K562 (cell line): ENCODE measurements at regions of chr2 and their contacts with region 1.

Region 1: DNA sequence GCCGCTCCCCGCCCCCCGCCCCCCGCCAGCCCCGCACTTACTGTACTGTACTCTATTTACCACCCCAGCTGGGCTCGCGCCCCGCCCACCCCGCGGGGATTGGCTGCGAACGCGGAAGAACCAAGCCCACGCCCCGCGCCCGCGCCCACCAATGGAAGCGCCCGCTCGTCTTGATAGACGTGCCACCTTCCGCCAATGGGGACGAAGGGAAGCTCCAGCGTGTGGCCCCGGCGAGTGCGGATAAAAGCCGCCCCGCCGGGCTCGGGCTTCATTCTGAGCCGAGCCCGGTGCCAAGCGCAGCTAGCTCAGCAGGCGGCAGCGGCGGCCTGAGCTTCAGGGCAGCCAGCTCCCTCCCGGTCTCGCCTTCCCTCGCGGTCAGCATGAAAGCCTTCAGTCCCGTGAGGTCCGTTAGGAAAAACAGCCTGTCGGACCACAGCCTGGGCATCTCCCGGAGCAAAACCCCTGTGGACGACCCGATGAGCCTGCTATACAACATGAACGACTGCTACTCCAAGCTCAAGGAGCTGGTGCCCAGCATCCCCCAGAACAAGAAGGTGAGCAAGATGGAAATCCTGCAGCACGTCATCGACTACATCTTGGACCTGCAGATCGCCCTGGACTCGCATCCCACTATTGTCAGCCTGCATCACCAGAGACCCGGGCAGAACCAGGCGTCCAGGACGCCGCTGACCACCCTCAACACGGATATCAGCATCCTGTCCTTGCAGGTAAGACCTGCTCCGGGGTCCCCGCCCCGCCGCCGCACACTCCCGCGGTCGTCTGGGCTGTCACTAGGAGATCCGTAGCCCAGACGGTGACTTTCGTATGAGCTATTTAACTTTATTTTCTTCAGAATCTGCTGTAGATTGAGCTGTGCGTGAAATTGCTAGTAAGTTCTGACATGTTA is at the start of gene ID2:
- DNase-seq: peak; percentile 97 to 99 (median 98)
- ATAC-seq: peak; percentile 75
- H3K4me3 ChIP-seq: peak within 1 kb of the TSS; percentile 68
- H3K27ac ChIP-seq: peak within 1 kb of the TSS; percentile 56; the same call in 2 of the 3 replicates
- H3K4me1 ChIP-seq: peaks cover 34 to 47% of the 10 kb centered on the region in 2 experiments
- H3K27me3 ChIP-seq: no peaks in the 10 kb centered on the region
- CTCF ChIP-seq: 0 out of 6 replicates have a peak, but pooled peaks of 1 of the 3 experiments have one; percentile 3
- EP300 ChIP-seq: 0 out of 2 replicates have a peak, but pooled peaks have one; percentile 5
- POLR2A ChIP-seq: peak; percentile 99
- RAD21 ChIP-seq: peak in 1 of 2 experiments; percentile 32; a peak in 2 of 4 replicates
- polyA plus RNA-seq, gene ID2: 17.4 to 23.1 TPM

Region 2: DNA sequence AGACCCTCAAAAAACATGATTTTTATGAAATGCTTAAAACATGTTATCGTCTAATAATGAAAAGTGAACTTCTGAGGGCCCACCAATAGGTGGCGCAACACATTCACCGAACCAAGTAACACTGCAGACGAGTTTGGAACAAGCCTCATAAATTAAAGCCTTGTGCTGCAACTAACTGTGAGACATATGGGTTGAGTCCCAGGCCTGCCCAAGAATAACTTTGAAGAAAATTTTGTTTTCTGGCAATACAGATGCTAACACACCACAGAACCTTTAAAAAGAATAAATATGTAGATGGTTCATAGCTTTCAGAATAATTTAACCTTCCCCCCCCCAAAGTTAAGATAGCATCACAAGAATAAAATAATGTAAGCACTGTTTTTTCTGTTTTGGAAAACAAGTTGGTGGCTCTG is 1479.0 kb before region 1 on chr2:
- CTCF ChIA-PET with region 1: no interaction called
- POLR2A ChIA-PET with region 1: no interaction called
- in situ Hi-C with region 1: no loop called
- intact Hi-C with region 1: loop called (anchors 2 kb)
- DNase-seq: peak; percentile 35 to 65 (median 50)
- ATAC-seq: peak; percentile 77
- H3K4me3 ChIP-seq: no peak overlapping the region
- H3K27ac ChIP-seq: no peak overlapping the region
- H3K4me1 ChIP-seq: no peaks in the 10 kb centered on the region
- H3K27me3 ChIP-seq: peaks cover 0 to 22% of the 10 kb centered on the region in 2 experiments; a peak in 2 of 5 replicates
- CTCF ChIP-seq: peak; percentile 52 to 90 (median 81)
- EP300 ChIP-seq: no peak
- POLR2A ChIP-seq: no peak
- RAD21 ChIP-seq: peak; percentile 43 to 74

Region 3: DNA sequence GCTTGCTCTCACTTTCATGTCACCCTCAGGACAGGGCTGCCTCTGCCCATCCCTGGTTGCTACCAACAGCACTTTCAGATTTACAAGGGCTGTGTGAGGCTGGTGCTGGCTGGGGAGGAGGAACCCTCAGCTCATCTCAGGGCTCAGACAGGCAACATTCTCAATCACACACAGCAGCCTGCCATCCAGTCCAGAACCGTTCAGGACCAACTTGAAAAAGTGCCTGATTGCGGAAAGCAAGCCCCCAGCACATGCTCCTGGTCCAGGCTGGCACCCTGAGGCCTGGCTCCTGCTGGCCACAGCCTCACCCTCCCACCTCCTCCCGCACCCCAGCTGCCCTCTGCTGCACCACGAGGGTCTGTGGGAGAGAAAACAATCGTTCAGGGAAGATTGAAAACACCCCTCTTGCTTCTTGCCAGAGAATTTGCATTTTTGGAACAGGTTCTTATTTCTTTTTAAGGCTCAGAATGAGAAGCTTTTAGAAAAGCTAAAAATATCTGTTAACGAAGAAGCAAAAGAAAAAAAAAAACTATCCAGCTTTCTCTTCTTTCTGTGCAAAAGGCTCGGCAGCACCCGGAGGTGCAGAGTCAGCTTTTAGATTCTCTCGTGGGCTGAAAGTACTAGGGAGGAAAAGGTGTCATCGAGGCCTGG is 404.0 kb before region 1 on chr2:
- CTCF ChIA-PET with region 1: no interaction called
- POLR2A ChIA-PET with region 1: no interaction called
- in situ Hi-C with region 1: loop called (anchors 10 kb)
- intact Hi-C with region 1: no loop called
- DNase-seq: no peak
- ATAC-seq: no peak
- H3K4me3 ChIP-seq: no peak overlapping the region
- H3K27ac ChIP-seq: no peak overlapping the region
- H3K4me1 ChIP-seq: no peaks in the 10 kb centered on the region
- H3K27me3 ChIP-seq: peaks cover 9 to 38% of the 10 kb centered on the region in 2 experiments; a peak in 3 of 5 replicates
- CTCF ChIP-seq: no peak
- EP300 ChIP-seq: no peak
- POLR2A ChIP-seq: no peak
- RAD21 ChIP-seq: no peak

Region 4: DNA sequence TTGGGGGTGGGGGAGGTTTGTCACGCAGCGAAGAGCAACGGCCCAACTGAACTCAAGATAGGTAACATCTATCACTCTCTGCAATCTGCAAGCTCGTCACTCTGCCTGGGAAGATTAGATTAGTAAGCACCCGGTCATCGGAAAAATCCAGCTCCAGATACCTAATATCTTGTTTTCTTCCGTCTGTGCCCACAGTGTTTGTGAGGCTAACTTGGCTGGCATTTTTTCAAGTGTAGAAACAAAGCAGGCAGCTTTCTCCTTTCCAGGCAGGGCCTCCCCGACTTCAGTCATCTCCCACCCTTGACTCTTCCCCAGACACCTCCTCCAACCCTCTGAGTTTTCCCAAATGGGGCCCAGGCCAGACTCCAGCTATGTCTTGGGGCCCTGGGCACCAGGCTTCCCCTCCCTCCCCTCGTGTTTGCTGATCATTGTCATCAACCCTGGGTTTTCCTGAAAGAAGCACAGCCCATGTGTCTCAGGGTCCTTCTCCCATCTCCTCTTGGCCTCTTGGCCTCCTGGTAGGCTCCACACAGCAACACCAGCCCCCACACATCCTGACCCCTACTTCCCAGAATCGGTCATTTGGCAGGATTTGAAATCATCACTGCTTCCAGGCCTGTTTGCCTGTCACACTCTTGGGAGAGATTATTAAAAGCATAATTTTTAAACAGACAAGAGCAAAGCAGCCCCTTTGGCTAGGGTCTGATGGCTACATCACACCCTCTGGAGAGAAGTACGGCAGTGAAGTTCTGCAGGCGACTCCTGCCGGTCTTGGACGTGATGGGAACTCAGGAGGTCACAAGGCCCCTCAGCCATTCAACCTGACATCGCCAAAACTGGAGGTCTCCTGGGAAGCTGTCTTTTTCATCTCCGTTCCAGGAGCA is 145.1 kb before region 1 on chr2:
- CTCF ChIA-PET with region 1: no interaction called
- POLR2A ChIA-PET with region 1: interaction called, 13 read pairs
- in situ Hi-C with region 1: no loop called
- intact Hi-C with region 1: no loop called
- DNase-seq: peak; percentile 38 to 57 (median 52)
- ATAC-seq: no peak; the same call in 2 of the 3 replicates
- H3K4me3 ChIP-seq: no peak overlapping the region
- H3K27ac ChIP-seq: no peak overlapping the region
- H3K4me1 ChIP-seq: peaks cover 32 to 52% of the 10 kb centered on the region in 2 experiments
- H3K27me3 ChIP-seq: no peaks in the 10 kb centered on the region
- CTCF ChIP-seq: no peak
- EP300 ChIP-seq: peak; percentile 91
- POLR2A ChIP-seq: no peak
- RAD21 ChIP-seq: no peak

Region 5: GRCh38 chr2:8636721-8637636 is 45.1 kb before region 1 on chr2:
- CTCF ChIA-PET with region 1: no interaction called
- POLR2A ChIA-PET with region 1: interaction called, 17 read pairs
- in situ Hi-C with region 1: no loop called
- intact Hi-C with region 1: no loop called
- DNase-seq: no peak
- ATAC-seq: no peak; the same call in 2 of the 3 replicates
- H3K4me3 ChIP-seq: no peak overlapping the region
- H3K27ac ChIP-seq: no peak overlapping the region
- H3K4me1 ChIP-seq: peaks cover 0 to 6% of the 10 kb centered on the region in 2 experiments; a peak in 3 of 5 replicates
- H3K27me3 ChIP-seq: peaks cover 53 to 81% of the 10 kb centered on the region in 2 experiments; a peak in 4 of 5 replicates
- CTCF ChIP-seq: no peak
- EP300 ChIP-seq: no peak
- POLR2A ChIP-seq: no peak
- RAD21 ChIP-seq: no peak

Region 6: DNA sequence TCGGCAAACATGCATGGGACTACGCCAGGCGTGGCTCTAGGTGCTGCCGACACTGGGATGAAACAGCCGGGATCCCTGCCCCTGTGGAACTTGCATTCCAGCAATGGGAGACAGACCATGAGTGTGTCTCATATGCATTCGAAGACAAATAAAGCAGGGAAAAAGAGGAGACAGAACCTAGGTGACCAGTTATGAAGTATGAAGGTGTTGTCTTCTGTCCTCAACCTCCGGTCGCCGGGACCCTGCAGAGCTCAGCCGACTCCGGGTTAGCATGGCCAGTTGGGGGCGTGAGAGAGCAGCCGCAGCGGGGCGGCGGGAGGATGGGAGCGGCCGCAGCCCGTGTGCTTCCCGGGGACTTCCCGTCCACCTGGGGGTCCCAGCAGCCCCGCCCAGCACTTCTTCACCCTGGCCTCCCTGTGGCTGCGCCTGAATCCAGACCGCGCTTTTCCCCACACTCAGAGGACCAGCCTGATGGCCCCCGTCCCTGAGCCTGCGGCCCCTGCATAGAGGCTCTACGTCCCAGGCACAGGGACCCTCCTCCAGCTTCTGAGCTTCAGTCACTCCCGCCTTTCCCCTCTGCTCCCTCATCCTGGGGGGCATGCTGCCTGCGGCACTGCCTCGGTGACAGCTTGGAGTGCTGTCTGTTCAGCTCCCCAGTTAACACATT is 11.2 kb after region 1 on chr2:
- CTCF ChIA-PET with region 1: no interaction called
- POLR2A ChIA-PET with region 1: interaction called, 14 read pairs
- in situ Hi-C with region 1: no loop called
- intact Hi-C with region 1: no loop called
- DNase-seq: peak; percentile 58 to 77 (median 73)
- ATAC-seq: peak; percentile 92
- H3K4me3 ChIP-seq: no peak overlapping the region
- H3K27ac ChIP-seq: no peak overlapping the region
- H3K4me1 ChIP-seq: peaks cover 10 to 17% of the 10 kb centered on the region in 2 experiments; a peak in 4 of 5 replicates
- H3K27me3 ChIP-seq: no peaks in the 10 kb centered on the region
- CTCF ChIP-seq: peak; percentile 76 to 89 (median 87)
- EP300 ChIP-seq: no peak
- POLR2A ChIP-seq: no peak
- RAD21 ChIP-seq: peak; percentile 41 to 75; a peak in 3 of 4 replicates